ENCODE measurements at regions of chr12 and their contacts with region 1.

Region 1: GRCh38 chr12:76586764-76587395 is 27.3 kb upstream of the OSBPL8 start:
- DNase-seq: peak in 1 of 2 experiments; percentile 57
- ATAC-seq: peak; percentile 54 to 78; a peak in 3 of 6 replicates
- H3K4me3 ChIP-seq: no peak overlapping the region
- H3K27ac ChIP-seq: no peak overlapping the region
- H3K4me1 ChIP-seq: 0 out of 3 replicates have a peak, but pooled peaks cover 3% of the 10 kb centered on the region
- CTCF ChIP-seq: peak; percentile 80
- EP300 ChIP-seq: no peak
- POLR2A ChIP-seq: no peak
- RAD21 ChIP-seq: peak; percentile 76 to 83

Region 2: GRCh38 chr12:76559400-76560085 is 27.3 kb before region 1 on chr12 and contains the start of gene OSBPL8:
- CTCF ChIA-PET with region 1: interaction called, 12 read pairs
- POLR2A ChIA-PET with region 1: no interaction called
- DNase-seq: peak; percentile 80 to 95
- ATAC-seq: peak; percentile 90 to 91
- H3K4me3 ChIP-seq: peak within 1 kb of the TSS; percentile 96
- H3K27ac ChIP-seq: peak within 1 kb of the TSS; percentile 86 to 93
- H3K4me1 ChIP-seq: peaks cover 16% of the 10 kb centered on the region; the same call in 2 of the 3 replicates
- CTCF ChIP-seq: peak; percentile 36; the same call in 1 of the 3 replicates
- EP300 ChIP-seq: no peak
- POLR2A ChIP-seq: peak; percentile 96
- RAD21 ChIP-seq: peak; percentile 37 to 56; a peak in 3 of 5 replicates
- polyA plus RNA-seq, gene OSBPL8: 30.9 and 43.2 TPM in 2 replicates

Region 3: GRCh38 chr12:76608075-76608474 is 21.2 kb after region 1 on chr12:
- CTCF ChIA-PET with region 1: interaction called, 59 read pairs
- POLR2A ChIA-PET with region 1: no interaction called
- DNase-seq: no peak
- ATAC-seq: no peak
- H3K4me3 ChIP-seq: no peak overlapping the region
- H3K27ac ChIP-seq: no peak overlapping the region
- H3K4me1 ChIP-seq: peaks cover 12% of the 10 kb centered on the region; the same call in 2 of the 3 replicates
- CTCF ChIP-seq: no peak
- EP300 ChIP-seq: no peak
- POLR2A ChIP-seq: no peak
- RAD21 ChIP-seq: no peak